ENCODE measurements at regions of chr10 and their contacts with region 1.

Region 1: GRCh38 chr10:124418726-124419501 is at the start of gene OAT:
- H3K4me3 Mint-ChIP-seq: peak within 1 kb of the TSS; percentile 77
- H3K27ac Mint-ChIP-seq: peak within 1 kb of the TSS; percentile 57
- H3K4me1 Mint-ChIP-seq: peaks cover 11% of the 10 kb centered on the region
- H3K27me3 Mint-ChIP-seq: peaks cover 43% of the 10 kb centered on the region

Region 2: GRCh38 chr10:124461438-124462347 is 42.8 kb after region 1 on chr10 and contains the start of gene LHPP:
- intact Hi-C with region 1: loop called (anchors 5 kb)
- H3K4me3 Mint-ChIP-seq: peak within 1 kb of the TSS; percentile 82
- H3K27ac Mint-ChIP-seq: peak within 1 kb of the TSS; percentile 87
- H3K4me1 Mint-ChIP-seq: peaks cover 21% of the 10 kb centered on the region
- H3K27me3 Mint-ChIP-seq: peaks cover 16% of the 10 kb centered on the region

Region 3: DNA sequence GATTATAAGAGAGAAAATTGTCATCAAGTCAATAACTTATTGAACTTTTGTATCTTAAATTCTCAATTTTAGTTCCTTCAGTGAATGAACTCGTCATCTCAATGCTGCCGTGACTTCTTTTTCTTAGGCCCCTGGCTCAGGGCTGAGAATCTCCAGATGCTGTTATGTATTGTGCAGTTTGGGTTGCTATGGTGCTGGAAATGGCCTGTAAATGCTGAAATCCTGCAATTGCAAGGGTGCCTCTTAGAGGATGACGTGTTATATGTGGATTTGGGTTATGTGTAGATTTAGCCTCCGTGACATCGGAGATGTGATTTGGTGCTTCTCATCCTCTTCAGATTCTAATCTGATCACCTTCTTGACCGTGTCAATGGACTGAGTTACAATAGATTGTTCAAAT is 467.3 kb after region 1 on chr10:
- intact Hi-C with region 1: no loop called
- H3K4me3 Mint-ChIP-seq: no peak overlapping the region
- H3K27ac Mint-ChIP-seq: no peak overlapping the region
- H3K4me1 Mint-ChIP-seq: no peaks in the 10 kb centered on the region
- H3K27me3 Mint-ChIP-seq: no peaks in the 10 kb centered on the region

Measured in dendritic cell treated with granulocyte-macrophage colony-stimulating factor and Interleukin-4, amounts not matched to agents 40 ng/mL and 50 ng/mL, for 4 days (primary cell).